OCI-LY7 (cell line): ENCODE measurements at regions of chr7 and their contacts with region 1.

Region 1: GRCh38 chr7:7977774-7978173 is 9.2 kb downstream of the GLCCI1 start:
- DNase-seq: peak; percentile 9
- H3K4me3 ChIP-seq: no peak overlapping the region
- H3K27ac ChIP-seq: no peak overlapping the region
- H3K4me1 ChIP-seq: peaks cover 38% of the 10 kb centered on the region
- CTCF ChIP-seq: no peak

Region 2: GRCh38 chr7:7795203-7796135 is 182.3 kb before region 1 on chr7:
- CTCF ChIA-PET with region 1: no interaction called
- POLR2A ChIA-PET with region 1: no interaction called
- intact Hi-C with region 1: no loop called
- DNase-seq: no peak
- H3K4me3 ChIP-seq: no peak overlapping the region
- H3K27ac ChIP-seq: no peak overlapping the region
- H3K4me1 ChIP-seq: no peaks in the 10 kb centered on the region
- CTCF ChIP-seq: no peak

Region 3: GRCh38 chr7:7989133-7989984 is 11.6 kb after region 1 on chr7:
- CTCF ChIA-PET with region 1: no interaction called
- POLR2A ChIA-PET with region 1: interaction called, 26 read pairs
- intact Hi-C with region 1: no loop called
- DNase-seq: no peak
- H3K4me3 ChIP-seq: no peak overlapping the region
- H3K27ac ChIP-seq: no peak overlapping the region
- H3K4me1 ChIP-seq: peaks cover 3% of the 10 kb centered on the region
- CTCF ChIP-seq: no peak